Naive thymus-derived CD4-positive, alpha-beta T cell (primary cell): ENCODE measurements at regions of chr10 and their contacts with region 1.

Region 1: GRCh38 chr10:118035354-118036005 is 11.3 kb downstream of the RAB11FIP2 start:
- DNase-seq: peak in 7 of 9 donors; percentile 7 to 57 (median 34)
- ATAC-seq: peak; percentile 82
- H3K4me3 ChIP-seq: no peak overlapping the region
- H3K4me3 Mint-ChIP-seq: peak overlapping the region; percentile 46 to 79 (median 66)
- H3K27ac ChIP-seq: peak overlapping the region; percentile 34
- H3K27ac Mint-ChIP-seq: peak overlapping the region; percentile 54 to 88 (median 81)
- H3K4me1 ChIP-seq: peaks cover 0 to 24% of the 10 kb centered on the region in 2 donors
- H3K4me1 Mint-ChIP-seq: peaks cover 14 to 57% (median 42%) of the 10 kb centered on the region in 7 donors
- H3K27me3 ChIP-seq: no peaks in the 10 kb centered on the region
- H3K27me3 Mint-ChIP-seq: no peaks in the 10 kb centered on the region

Region 2: GRCh38 chr10:118046395-118047156 is 11.1 kb after region 1 on chr10 and contains the start of gene RAB11FIP2:
- CTCF ChIA-PET with region 1: no interaction called
- POLR2A ChIA-PET with region 1: no interaction called
- intact Hi-C with region 1: loop called (anchors 1 kb)
- DNase-seq: peak; percentile 92 to 98 (median 95)
- ATAC-seq: peak; percentile 97
- H3K4me3 ChIP-seq: peak within 1 kb of the TSS; percentile 81
- H3K4me3 Mint-ChIP-seq: peak within 1 kb of the TSS; percentile 84 to 95 (median 88)
- H3K27ac ChIP-seq: peak within 1 kb of the TSS; percentile 83
- H3K27ac Mint-ChIP-seq: peak within 1 kb of the TSS; percentile 77 to 94 (median 85)
- H3K4me1 ChIP-seq: peaks cover 18 to 19% of the 10 kb centered on the region in 2 donors
- H3K4me1 Mint-ChIP-seq: peaks cover 17 to 54% (median 49%) of the 10 kb centered on the region in 7 donors
- H3K27me3 ChIP-seq: no peaks in the 10 kb centered on the region
- H3K27me3 Mint-ChIP-seq: peaks cover 0 to 20% (median 0%) of the 10 kb centered on the region in 5 donors
- total RNA-seq, gene RAB11FIP2: 17.5 to 32.6 (median 21.6) TPM